ENCODE measurements at regions of chr15 and their contacts with region 1.

Region 1: GRCh38 chr15:40893733-40894688 is at the start of gene VPS18:
- DNase-seq: peak; percentile 99
- H3K4me3 ChIP-seq: peak within 1 kb of the TSS; percentile 56 to 84 (median 82)
- H3K27ac ChIP-seq: peak within 1 kb of the TSS; percentile 87 to 96 (median 92)
- H3K4me1 ChIP-seq: peaks cover 0 to 20% (median 20%) of the 10 kb centered on the region in 4 donors
- H3K27me3 ChIP-seq: no peaks in the 10 kb centered on the region
- CTCF ChIP-seq: peak; percentile 94 to 99 (median 96)
- EP300 ChIP-seq: peak in 2 of 4 donors; percentile 28 to 93
- POLR2A ChIP-seq: peak; percentile 74 to 85
- total RNA-seq, gene VPS18: 17.4 to 19.6 (median 19.0) TPM

Region 2: DNA sequence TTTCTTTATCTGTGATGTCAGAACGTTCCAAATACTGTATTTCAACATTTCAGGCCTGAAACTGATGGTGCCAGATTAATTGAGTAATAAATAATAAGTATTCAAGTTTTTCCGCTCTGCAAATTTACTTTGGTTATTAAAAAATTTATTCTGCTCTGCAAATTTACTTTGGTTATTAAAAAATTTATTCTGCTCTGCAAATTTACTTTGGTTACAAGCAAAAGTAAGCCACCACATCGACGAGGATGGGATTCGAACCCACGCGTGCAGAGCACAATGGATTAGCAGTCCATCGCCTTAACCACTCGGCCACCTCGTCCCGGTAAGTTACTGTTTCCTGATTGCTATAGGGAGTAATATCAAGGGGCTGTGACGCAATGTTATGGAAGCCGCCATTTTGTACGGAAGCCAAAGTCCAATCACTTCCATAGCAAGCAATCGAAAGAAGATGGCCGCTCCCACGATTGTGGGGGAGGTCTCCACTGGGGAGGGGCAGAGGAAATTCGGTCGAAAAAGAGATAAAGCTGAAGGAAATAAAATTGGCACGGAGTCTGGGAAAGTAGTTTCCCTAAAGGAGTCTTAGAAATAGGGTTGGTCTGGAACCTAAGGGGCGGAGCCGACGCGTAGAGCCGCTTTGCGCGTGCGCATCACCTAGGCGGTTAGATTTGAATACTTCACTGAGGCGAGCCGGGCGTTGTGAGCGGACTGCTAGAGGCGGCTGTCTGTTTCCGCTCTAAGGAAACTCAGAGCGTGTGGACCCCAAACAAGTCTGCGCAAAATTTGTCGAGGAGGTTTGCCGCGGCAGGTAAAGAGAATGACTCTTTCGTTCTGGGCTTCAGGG is 300.2 kb before region 1 on chr15 and contains the start of gene KNL1:
- intact Hi-C with region 1: loop called (anchors 5 kb)
- DNase-seq: peak; percentile 95
- H3K4me3 ChIP-seq: peak within 1 kb of the TSS; percentile 40 to 60 (median 57)
- H3K27ac ChIP-seq: peak within 1 kb of the TSS; percentile 83 to 88 (median 86)
- H3K4me1 ChIP-seq: peaks cover 0 to 12% (median 9%) of the 10 kb centered on the region in 4 donors
- H3K27me3 ChIP-seq: peaks cover 0 to 29% (median 6%) of the 10 kb centered on the region in 3 donors
- CTCF ChIP-seq: no peak
- EP300 ChIP-seq: no peak
- POLR2A ChIP-seq: no peak
- total RNA-seq, gene KNL1: 0.36 to 0.83 (median 0.68) TPM in 3 of 4 donors, not detected in the other

Region 3: DNA sequence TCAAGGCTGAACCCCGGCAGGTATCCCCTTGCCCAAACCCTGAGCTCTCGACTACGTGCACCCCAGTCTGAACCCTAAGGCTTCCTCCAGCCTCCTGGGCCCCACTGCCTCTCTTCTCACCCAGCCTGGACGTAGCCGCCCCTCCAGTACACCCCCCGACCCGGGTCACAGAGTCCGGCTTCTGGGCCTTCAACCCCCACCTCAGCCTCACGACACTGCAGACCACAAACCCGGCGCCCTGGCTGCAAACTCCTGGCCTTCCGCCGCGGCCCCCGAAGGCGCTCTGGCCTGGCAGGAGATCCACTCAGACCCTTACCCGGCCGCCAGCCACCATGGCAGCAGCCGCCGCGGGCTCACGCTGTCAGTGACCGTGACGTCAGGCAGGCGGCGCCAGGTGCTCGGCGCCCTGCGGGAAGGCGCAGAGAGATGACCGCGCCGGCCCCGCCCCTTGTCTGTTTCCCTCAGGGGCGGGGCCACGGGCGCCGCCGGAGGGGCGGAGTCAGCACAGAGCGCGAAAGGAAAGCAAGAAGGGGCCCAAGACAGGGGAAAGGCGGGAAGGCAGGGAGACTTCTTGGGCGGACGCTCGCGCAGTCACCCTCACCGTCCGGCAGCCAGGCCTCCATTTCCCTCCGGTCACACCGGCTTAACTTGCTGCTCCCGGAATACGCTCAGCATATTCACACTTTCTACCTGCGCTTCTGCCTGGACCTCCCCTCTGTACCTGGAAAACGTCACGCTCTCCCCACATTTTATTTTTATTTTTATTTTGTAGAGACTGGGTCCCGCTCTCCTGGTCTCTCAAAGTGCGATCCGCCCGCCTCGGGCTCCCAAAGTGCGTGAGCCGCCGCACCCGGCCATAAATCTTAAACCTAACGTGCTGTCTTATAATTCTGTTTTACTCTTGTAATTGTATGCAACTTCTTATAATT is 138.9 kb before region 1 on chr15 and contains the start of gene RMDN3:
- intact Hi-C with region 1: loop called (anchors 10 kb)
- DNase-seq: peak; percentile 96
- H3K4me3 ChIP-seq: peak within 1 kb of the TSS; percentile 69 to 95 (median 85)
- H3K27ac ChIP-seq: peak within 1 kb of the TSS; percentile 76 to 84 (median 80)
- H3K4me1 ChIP-seq: peaks cover 0 to 35% (median 25%) of the 10 kb centered on the region in 4 donors
- H3K27me3 ChIP-seq: no peaks in the 10 kb centered on the region
- CTCF ChIP-seq: no peak
- EP300 ChIP-seq: no peak
- POLR2A ChIP-seq: no peak
- total RNA-seq, gene RMDN3: 20.8 to 26.4 (median 22.4) TPM

Region 4: GRCh38 chr15:40857601-40858341 is 36.2 kb before region 1 on chr15:
- intact Hi-C with region 1: loop called (anchors 1 kb)
- DNase-seq: peak; percentile 85
- H3K4me3 ChIP-seq: no peak overlapping the region
- H3K27ac ChIP-seq: no peak overlapping the region
- H3K4me1 ChIP-seq: peaks cover 0 to 8% (median 3%) of the 10 kb centered on the region in 4 donors
- H3K27me3 ChIP-seq: peaks cover 0 to 24% (median 10%) of the 10 kb centered on the region in 3 donors
- CTCF ChIP-seq: peak; percentile 85 to 98 (median 96)
- EP300 ChIP-seq: no peak
- POLR2A ChIP-seq: no peak

Region 5: GRCh38 chr15:40928821-40929659 is 35.0 kb after region 1 on chr15 and contains the start of gene DLL4:
- intact Hi-C with region 1: no loop called
- DNase-seq: no peak
- H3K4me3 ChIP-seq: peak within 1 kb of the TSS; percentile 17 to 52 (median 48)
- H3K27ac ChIP-seq: peak within 1 kb of the TSS in 3 of 4 donors; percentile 34 to 47 (median 40)
- H3K4me1 ChIP-seq: peaks cover 0 to 58% (median 56%) of the 10 kb centered on the region in 4 donors
- H3K27me3 ChIP-seq: peaks cover 66 to 86% (median 84%) of the 10 kb centered on the region in 3 donors
- CTCF ChIP-seq: no peak
- EP300 ChIP-seq: no peak
- POLR2A ChIP-seq: peak in 1 of 2 donors; percentile 77
- total RNA-seq, gene DLL4: 3.5 to 5.4 (median 4.6) TPM

Region 6: DNA sequence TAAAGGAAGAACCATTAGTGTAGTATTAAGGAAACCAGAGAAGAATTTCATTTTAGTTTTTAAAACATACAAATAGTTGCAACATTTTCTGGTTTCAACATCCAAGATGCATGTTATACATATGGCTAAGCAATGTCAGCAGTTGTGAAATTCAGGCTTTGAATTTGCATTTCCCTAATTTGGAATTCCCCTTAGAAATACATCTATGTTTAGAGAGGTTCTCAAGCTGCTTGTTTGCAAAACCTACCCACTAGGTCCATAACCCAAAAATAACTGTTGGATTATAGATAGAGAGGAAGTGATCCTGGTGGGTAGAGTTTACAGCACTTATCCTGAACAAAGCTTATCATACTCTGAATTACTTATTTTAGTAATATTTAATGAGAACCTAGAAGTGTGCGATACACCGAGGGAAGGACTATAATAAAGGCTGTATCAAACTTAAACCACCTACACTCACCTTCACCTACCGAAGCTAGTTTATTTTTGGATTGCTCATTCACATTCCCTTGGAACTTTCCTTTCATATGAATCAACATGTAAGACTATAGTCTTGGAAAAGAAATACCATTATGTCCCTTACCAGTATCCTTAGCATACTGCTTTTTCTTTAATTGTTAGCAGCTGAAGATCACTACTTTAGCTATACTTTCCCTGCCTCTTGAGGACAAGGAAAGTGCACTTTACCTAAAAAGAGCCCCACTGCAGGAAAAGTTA is 119.8 kb after region 1 on chr15:
- intact Hi-C with region 1: no loop called
- DNase-seq: no peak
- H3K4me3 ChIP-seq: no peak overlapping the region
- H3K27ac ChIP-seq: no peak overlapping the region
- H3K4me1 ChIP-seq: peaks cover 0 to 11% (median 4%) of the 10 kb centered on the region in 4 donors
- H3K27me3 ChIP-seq: no peaks in the 10 kb centered on the region
- CTCF ChIP-seq: no peak
- EP300 ChIP-seq: no peak
- POLR2A ChIP-seq: no peak